ENCODE measurements at regions of chr1 and their contacts with region 1.

Region 1: GRCh38 chr1:3900119-3900968 is at the start of gene C1orf174:
- DNase-seq: peak; percentile 91
- H3K4me3 Mint-ChIP-seq: peak within 1 kb of the TSS; percentile 97
- H3K27ac Mint-ChIP-seq: peak within 1 kb of the TSS; percentile 99
- H3K4me1 Mint-ChIP-seq: peaks cover 37% of the 10 kb centered on the region
- H3K27me3 Mint-ChIP-seq: no peaks in the 10 kb centered on the region
- total RNA-seq, gene C1orf174: 44.0 and 44.9 TPM in 2 replicates

Region 2: DNA sequence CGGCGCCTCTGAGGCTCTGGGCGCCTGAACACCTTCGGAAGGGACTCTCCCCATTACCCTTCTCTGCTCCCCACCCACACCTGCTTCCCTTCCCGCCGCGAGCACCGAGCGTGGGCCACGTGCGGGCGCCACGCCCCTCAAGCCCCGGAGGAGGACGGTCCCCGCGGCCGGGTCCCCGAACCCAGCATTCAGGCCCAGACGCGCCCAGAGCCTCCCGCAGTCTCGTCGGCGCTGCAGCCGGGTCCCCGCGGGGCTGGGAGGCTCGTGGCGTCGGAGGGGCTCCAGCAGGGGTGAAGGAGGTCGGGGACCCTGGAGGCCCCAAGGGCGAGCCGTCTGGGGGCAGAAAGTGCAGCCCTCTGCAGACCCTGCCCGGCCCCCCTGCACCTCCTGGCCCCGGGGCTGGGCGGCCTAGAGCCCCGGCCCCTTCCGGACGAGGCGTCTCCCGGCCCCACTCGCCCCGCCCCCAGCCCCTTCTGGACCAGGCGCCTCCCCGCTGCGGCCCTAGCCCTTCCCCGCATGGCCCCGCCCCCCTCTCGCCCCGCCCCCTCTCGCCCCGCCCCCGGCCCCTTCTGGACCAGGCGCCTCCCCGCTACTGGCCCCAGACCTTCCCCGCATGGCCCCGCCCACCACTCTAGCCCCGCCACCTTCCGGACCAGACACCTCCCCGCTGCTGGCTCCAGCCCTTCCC is 128.2 kb before region 1 on chr1:
- intact Hi-C with region 1: loop called (anchors 10 kb)
- DNase-seq: peak; percentile 81
- H3K4me3 Mint-ChIP-seq: peak overlapping the region; percentile 64
- H3K27ac Mint-ChIP-seq: no peak overlapping the region
- H3K4me1 Mint-ChIP-seq: peaks cover 5% of the 10 kb centered on the region
- H3K27me3 Mint-ChIP-seq: no peaks in the 10 kb centered on the region

Region 3: GRCh38 chr1:3796215-3797061 is 103.9 kb before region 1 on chr1 and contains the start of gene LRRC47:
- intact Hi-C with region 1: loop called (anchors 2 kb)
- DNase-seq: peak; percentile 92
- H3K4me3 Mint-ChIP-seq: peak within 1 kb of the TSS; percentile 94
- H3K27ac Mint-ChIP-seq: peak within 1 kb of the TSS; percentile 78
- H3K4me1 Mint-ChIP-seq: peaks cover 26% of the 10 kb centered on the region
- H3K27me3 Mint-ChIP-seq: no peaks in the 10 kb centered on the region
- total RNA-seq, gene LRRC47: 40.4 and 41.3 TPM in 2 replicates

Region 4: GRCh38 chr1:3856908-3857790 is 43.2 kb before region 1 on chr1 and contains the starts of genes CEP104 and DFFB:
- intact Hi-C with region 1: loop called (anchors 1 kb)
- DNase-seq: peak; percentile 95
- H3K4me3 Mint-ChIP-seq: peak within 1 kb of the TSS; percentile 97
- H3K27ac Mint-ChIP-seq: peak within 1 kb of the TSS; percentile 81
- H3K4me1 Mint-ChIP-seq: peaks cover 16% of the 10 kb centered on the region
- H3K27me3 Mint-ChIP-seq: no peaks in the 10 kb centered on the region
- total RNA-seq, gene CEP104: 35.4 and 49.9 TPM in 2 replicates
- total RNA-seq, gene DFFB: 15.2 and 17.3 TPM in 2 replicates

Measured in activated T-helper 2 cell treated with anti-CD3 and anti-CD28 coated beads, Interferon-gamma antibody, Interleukin-2, Interleukin-4, amounts not matched to agents 10 μg/mL and 5 μg/mL and 100 μg/mL, durations not matched to agents 14 hours and 24 hours and 36 hours (primary cell).